Activated CD4-positive, alpha-beta T cell treated with anti-CD3 and anti-CD28 coated beads for 36 hours (primary cell): ENCODE measurements at regions of chr21 and their contacts with region 1.

Region 1: GRCh38 chr21:44927587-44928461 is 7.1 kb upstream of the ITGB2 start:
- DNase-seq: peak; percentile 97
- ATAC-seq: peak; percentile 74
- H3K4me3 Mint-ChIP-seq: peak overlapping the region; percentile 90
- H3K27ac Mint-ChIP-seq: peak overlapping the region; percentile 94
- H3K4me1 Mint-ChIP-seq: peaks cover 80% of the 10 kb centered on the region
- H3K27me3 Mint-ChIP-seq: no peaks in the 10 kb centered on the region

Region 2: DNA sequence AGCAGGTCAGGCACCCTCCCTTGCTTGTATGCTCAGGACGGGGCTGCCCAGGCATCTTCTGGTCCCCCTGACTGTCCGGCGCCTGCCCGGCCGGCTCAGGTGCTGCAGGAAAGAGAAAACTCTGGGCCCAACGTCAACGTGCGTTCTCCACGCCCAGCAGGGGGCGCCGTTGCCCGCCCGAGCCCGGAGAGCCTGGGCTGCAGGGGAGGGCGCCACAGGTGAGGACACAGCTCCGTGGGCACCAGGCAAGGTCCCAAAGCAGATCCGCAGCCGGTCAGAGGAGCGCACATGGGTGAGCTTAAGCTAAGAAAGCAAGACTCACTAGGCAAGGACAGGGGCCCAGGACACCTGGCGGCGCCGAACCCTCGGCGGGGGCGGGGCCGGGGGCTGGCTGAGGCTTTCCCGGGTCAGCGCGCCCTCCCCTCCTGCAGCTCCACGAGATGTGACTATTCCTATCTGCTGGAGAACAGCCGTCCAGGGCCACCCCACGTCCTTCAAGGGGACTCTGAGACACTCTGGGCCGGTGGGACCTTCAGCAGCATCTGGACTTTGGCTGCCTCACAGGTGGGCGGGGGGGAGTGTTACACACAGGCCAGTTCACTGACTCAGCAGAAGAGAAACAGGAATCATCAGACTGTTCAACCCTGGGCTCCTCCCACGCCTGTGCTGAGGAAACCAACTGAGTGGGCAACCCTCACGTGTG is 417.2 kb before region 1 on chr21:
- CTCF ChIA-PET with region 1: no interaction called
- POLR2A ChIA-PET with region 1: no interaction called
- intact Hi-C with region 1: loop called in 1 of 2 experiments (anchors 2 kb)
- DNase-seq: peak; percentile 89
- ATAC-seq: peak; percentile 94
- H3K4me3 Mint-ChIP-seq: no peak overlapping the region
- H3K27ac Mint-ChIP-seq: no peak overlapping the region
- H3K4me1 Mint-ChIP-seq: no peaks in the 10 kb centered on the region
- H3K27me3 Mint-ChIP-seq: no peaks in the 10 kb centered on the region

Region 3: DNA sequence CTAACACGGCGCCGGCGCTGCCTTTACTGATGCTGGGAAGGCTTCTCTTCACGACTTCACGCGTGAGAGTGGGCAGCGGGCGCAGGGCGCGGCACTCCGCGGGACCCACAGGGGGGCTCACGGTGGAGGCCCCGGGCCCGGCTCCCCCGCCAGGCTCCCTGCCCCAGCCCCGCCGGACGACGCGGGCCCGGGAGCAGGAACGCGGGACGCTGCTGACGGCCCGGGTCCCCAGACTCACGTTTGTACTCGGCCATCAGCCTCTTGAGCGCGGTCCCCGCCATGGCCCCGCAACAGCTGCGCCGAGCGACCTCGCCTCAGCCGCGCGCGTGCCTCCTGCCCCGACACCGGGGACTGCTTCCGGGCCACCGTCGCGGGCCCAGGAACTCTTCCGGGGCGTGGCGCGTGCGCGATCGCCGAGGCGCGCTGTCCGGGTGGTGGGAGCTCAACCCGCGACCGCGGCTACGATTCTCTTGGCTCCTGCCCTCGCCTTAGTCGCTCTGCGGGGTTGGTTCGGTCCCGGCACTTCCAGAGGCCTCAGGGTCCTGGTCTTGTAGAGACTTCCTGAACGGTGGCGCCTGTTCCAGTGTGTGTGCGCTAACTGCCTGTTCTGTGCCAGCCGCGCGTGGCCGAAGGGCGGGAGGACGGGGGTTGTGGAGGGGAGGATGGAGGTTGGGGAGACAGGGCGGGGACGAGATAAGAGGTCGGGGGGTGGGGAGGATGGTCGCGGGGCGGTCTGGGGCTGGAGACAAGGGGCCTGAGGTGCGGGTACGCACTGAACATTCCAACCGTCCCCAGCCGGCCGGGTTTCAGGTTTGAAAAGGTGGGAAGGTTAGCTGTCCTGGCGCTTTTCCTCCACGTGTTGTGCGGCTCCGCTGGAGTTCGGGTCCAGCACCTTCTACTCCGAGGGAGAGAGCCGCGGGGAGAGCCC is 126.1 kb before region 1 on chr21 and contains the start of gene UBE2G2:
- CTCF ChIA-PET with region 1: interaction called, 12 read pairs
- POLR2A ChIA-PET with region 1: no interaction called
- intact Hi-C with region 1: loop called (anchors 1 to 5 kb)
- DNase-seq: peak; percentile 92
- ATAC-seq: peak; percentile 95
- H3K4me3 Mint-ChIP-seq: peak within 1 kb of the TSS; percentile 94
- H3K27ac Mint-ChIP-seq: peak within 1 kb of the TSS; percentile 90
- H3K4me1 Mint-ChIP-seq: peaks cover 54% of the 10 kb centered on the region
- H3K27me3 Mint-ChIP-seq: no peaks in the 10 kb centered on the region
- total RNA-seq, gene UBE2G2: 103 to 121 TPM

Region 4: GRCh38 chr21:44845399-44846223 is 82.2 kb before region 1 on chr21:
- CTCF ChIA-PET with region 1: no interaction called
- POLR2A ChIA-PET with region 1: no interaction called
- intact Hi-C with region 1: loop called in 1 of 2 experiments (anchors 2 kb)
- DNase-seq: peak; percentile 81
- ATAC-seq: peak; percentile 86
- H3K4me3 Mint-ChIP-seq: peak overlapping the region; percentile 64
- H3K27ac Mint-ChIP-seq: peak overlapping the region; percentile 51
- H3K4me1 Mint-ChIP-seq: peaks cover 7% of the 10 kb centered on the region
- H3K27me3 Mint-ChIP-seq: no peaks in the 10 kb centered on the region

Region 5: GRCh38 chr21:44892536-44893277 is 35.1 kb before region 1 on chr21:
- CTCF ChIA-PET with region 1: interaction called, 16 read pairs
- POLR2A ChIA-PET with region 1: interaction called, 3 read pairs
- intact Hi-C with region 1: loop called (anchors 1 kb)
- DNase-seq: peak; percentile 87
- ATAC-seq: peak; percentile 85
- H3K4me3 Mint-ChIP-seq: no peak overlapping the region
- H3K27ac Mint-ChIP-seq: no peak overlapping the region
- H3K4me1 Mint-ChIP-seq: peaks cover 5% of the 10 kb centered on the region
- H3K27me3 Mint-ChIP-seq: no peaks in the 10 kb centered on the region

Region 6: GRCh38 chr21:44911389-44912157 is 16.3 kb before region 1 on chr21:
- CTCF ChIA-PET with region 1: interaction called, 24 read pairs
- POLR2A ChIA-PET with region 1: interaction called, 3 read pairs
- intact Hi-C with region 1: loop called (anchors 1 kb)
- DNase-seq: peak; percentile 77
- ATAC-seq: peak; percentile 70
- H3K4me3 Mint-ChIP-seq: peak overlapping the region; percentile 64
- H3K27ac Mint-ChIP-seq: peak overlapping the region; percentile 98
- H3K4me1 Mint-ChIP-seq: peaks cover 79% of the 10 kb centered on the region
- H3K27me3 Mint-ChIP-seq: no peaks in the 10 kb centered on the region

Region 7: DNA sequence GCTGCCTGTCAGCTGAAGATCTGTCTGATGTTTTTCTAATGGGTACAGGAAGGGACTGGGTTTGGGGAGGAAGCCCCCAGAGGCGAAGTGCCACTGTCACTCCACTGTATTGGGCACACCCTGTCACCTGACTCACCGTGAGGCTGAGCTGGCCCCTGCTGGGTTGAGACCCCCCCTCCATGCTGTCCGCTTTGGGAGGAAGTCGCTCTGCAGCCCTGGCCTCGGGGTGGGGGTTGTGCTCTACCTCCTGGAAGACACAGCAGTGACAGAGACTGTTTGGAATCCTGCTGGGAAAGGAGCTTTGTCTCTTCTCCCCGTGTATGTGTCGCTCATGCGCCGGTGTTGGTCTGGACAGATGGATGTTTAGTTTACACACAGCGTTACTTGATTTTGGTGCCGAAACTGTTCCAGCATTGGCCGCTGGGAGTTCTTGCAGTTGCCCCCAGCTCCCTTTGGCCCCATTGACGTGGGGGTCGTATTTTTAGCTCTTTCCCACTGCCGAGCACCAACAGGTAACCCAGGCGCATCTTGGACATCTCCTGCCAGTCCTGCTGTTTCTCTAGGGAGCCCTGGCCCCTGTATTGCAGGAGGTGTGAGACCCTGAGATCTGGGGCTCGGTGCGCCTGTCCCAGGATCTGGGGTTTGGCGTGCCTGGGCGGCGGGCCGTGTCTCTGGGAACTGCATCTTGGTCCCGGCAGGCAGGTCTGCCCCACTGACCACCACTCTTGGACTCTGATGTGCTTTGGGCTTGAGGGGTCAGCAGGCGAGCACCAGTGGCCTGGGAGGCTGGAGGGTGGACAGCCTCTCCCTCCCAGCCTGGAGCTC is 42.3 kb after region 1 on chr21:
- CTCF ChIA-PET with region 1: no interaction called
- POLR2A ChIA-PET with region 1: no interaction called
- intact Hi-C with region 1: no loop called
- DNase-seq: no peak
- ATAC-seq: no peak
- H3K4me3 Mint-ChIP-seq: no peak overlapping the region
- H3K27ac Mint-ChIP-seq: no peak overlapping the region
- H3K4me1 Mint-ChIP-seq: peaks cover 24% of the 10 kb centered on the region
- H3K27me3 Mint-ChIP-seq: no peaks in the 10 kb centered on the region